AG04449 (cell line): ENCODE measurements at regions of chr2 and their contacts with region 1.

Region 1: GRCh38 chr2:206561962-206562361 is 80.3 kb upstream of the FAM237A start:
- DNase-seq: no peak
- H3K4me3 ChIP-seq: no peak overlapping the region
- CTCF ChIP-seq: no peak

Region 2: DNA sequence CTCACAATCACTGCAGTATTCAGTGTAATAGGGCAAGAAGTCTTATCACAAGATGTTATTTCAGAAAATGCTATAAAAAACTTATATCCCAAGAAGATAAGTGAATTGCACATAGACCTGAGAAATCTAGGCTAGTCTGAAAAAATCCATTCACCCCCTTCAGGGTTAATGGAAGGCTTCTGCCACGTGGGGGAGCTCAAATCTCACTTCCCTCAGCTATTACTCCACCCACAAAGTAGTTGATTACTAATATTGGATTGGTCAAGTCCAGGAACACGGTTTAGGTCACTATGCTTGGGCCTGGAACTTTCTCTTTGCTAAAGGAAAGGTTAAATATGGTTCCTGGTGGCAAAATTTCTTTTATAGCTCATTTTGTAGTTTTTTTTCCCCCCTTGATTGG is 169.8 kb before region 1 on chr2:
- CTCF ChIA-PET with region 1: interaction called, 45 read pairs
- POLR2A ChIA-PET with region 1: interaction called, 3 read pairs
- DNase-seq: no peak
- H3K4me3 ChIP-seq: no peak overlapping the region
- CTCF ChIP-seq: peak; percentile 46

Region 3: GRCh38 chr2:206873423-206873822 is 311.5 kb after region 1 on chr2:
- CTCF ChIA-PET with region 1: no interaction called
- POLR2A ChIA-PET with region 1: no interaction called
- DNase-seq: no peak
- H3K4me3 ChIP-seq: no peak overlapping the region
- CTCF ChIP-seq: no peak